ENCODE measurements at regions of chr3 and their contacts with region 1.

Region 1: GRCh38 chr3:184174646-184175492 is at the start of gene AP2M1:
- DNase-seq: peak; percentile 94 to 99 (median 97)
- ATAC-seq: peak; percentile 98
- H3K4me3 ChIP-seq: peak within 1 kb of the TSS; percentile 87
- H3K4me3 Mint-ChIP-seq: peak within 1 kb of the TSS; percentile 96
- H3K27ac ChIP-seq: peak within 1 kb of the TSS in 1 of 2 donors; percentile 79
- H3K27ac Mint-ChIP-seq: peak within 1 kb of the TSS; percentile 86
- H3K4me1 ChIP-seq: peaks cover 35% of the 10 kb centered on the region
- H3K4me1 Mint-ChIP-seq: peaks cover 42% of the 10 kb centered on the region
- H3K27me3 ChIP-seq: no peaks in the 10 kb centered on the region
- H3K27me3 Mint-ChIP-seq: no peaks in the 10 kb centered on the region
- CTCF ChIP-seq: no peak
- total RNA-seq, gene AP2M1: 123 to 136 TPM

Region 2: DNA sequence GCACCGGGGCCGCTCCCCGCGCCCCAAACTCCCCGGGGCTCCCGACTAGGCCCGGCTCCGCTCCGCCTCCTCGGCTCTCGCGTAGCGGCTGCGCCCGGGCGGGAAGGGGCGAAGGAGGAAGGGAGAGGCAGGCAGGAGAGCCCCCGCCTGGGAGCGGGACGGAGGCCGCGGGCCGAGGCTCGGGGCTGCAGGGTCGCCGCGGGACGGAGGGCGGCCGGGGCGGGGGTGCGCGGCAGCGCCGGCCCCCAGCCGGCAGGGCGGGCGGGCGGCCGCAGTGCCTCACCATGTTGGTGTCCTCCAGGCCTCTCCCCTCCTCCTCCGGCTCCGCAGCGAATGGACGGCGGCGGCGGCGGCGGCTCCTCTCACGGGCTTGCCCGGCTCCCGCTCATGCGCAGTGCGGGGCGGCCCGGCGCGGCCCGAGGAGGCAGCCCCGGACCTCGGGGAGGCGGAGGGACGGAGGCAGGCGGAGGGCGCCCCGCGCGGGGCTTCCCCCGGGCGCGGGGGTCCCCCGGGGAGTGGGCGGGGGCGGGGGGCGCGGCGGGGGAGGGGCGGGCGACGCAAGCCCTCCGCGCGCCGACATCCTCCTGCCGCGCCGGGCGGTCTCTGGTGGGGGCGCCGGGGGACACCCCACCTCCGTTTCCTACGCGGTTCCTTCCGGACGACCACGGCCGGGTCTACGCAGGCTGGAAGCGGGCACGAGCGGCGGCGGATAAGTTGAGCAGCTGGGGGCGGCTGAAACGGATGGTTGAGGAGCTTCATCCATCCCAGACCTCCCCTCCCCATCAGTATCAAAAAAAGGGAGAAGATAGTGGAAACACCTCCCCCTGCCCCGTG is 1194.4 kb before region 1 on chr3 and contains the start of gene DCUN1D1:
- CTCF ChIA-PET with region 1: no interaction called
- POLR2A ChIA-PET with region 1: no interaction called
- intact Hi-C with region 1: loop called in 1 of 2 experiments (anchors 10 kb)
- DNase-seq: peak; percentile 78 to 94 (median 86)
- ATAC-seq: peak; percentile 85
- H3K4me3 ChIP-seq: peak within 1 kb of the TSS; percentile 93
- H3K4me3 Mint-ChIP-seq: peak within 1 kb of the TSS; percentile 97
- H3K27ac ChIP-seq: peak within 1 kb of the TSS in 1 of 2 donors; percentile 39
- H3K27ac Mint-ChIP-seq: peak within 1 kb of the TSS; percentile 82
- H3K4me1 ChIP-seq: peaks cover 31% of the 10 kb centered on the region
- H3K4me1 Mint-ChIP-seq: peaks cover 44% of the 10 kb centered on the region
- H3K27me3 ChIP-seq: no peaks in the 10 kb centered on the region
- H3K27me3 Mint-ChIP-seq: no peaks in the 10 kb centered on the region
- CTCF ChIP-seq: no peak
- total RNA-seq, gene DCUN1D1: 35.4 to 38.9 TPM

Region 3: DNA sequence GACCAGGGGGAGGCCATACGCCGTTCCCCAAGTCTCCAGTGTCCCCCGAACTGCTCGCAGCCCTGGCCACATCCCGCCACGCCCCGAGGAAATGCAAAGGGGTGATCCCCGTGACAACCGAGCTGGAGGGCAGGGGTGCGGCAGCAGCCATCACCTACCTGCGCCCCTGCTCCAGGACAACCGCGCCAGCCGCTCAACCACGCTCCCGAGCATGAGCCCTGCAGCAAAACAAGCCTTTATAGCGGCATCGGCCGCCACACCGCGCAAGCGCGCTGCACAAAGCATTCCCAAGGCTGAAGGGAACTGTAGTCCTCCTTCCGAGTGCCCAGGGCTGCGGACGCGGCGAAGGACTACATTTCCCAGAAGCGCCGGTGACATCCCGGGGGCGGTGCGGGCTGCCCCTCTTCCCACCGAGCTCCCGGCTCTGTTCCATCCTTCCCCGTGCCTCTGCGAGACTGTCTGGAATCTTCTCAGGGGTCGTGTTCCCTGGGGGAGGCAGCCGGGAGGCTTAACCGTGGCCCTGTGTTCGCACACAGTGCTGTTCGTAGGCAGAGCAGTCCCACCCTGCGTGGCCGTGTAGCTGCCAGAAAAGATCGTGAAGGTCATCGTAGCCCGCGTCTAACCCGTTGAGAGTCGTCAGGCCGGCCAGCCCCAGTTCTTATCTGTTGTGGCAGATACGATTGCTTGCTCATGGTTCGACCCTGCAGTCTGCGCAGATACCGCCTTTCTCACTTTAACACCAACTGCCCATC is 157.0 kb before region 1 on chr3 and contains the start of gene ABCC5:
- CTCF ChIA-PET with region 1: no interaction called
- POLR2A ChIA-PET with region 1: interaction called, 3 read pairs
- intact Hi-C with region 1: loop called in 1 of 2 experiments (anchors 1 kb)
- DNase-seq: peak; percentile 65 to 92 (median 78)
- ATAC-seq: peak; percentile 94
- H3K4me3 ChIP-seq: peak within 1 kb of the TSS; percentile 96
- H3K4me3 Mint-ChIP-seq: peak within 1 kb of the TSS; percentile 100
- H3K27ac ChIP-seq: peak within 1 kb of the TSS; percentile 23 to 43
- H3K27ac Mint-ChIP-seq: peak within 1 kb of the TSS; percentile 66
- H3K4me1 ChIP-seq: peaks cover 16% of the 10 kb centered on the region
- H3K4me1 Mint-ChIP-seq: peaks cover 26% of the 10 kb centered on the region
- H3K27me3 ChIP-seq: peaks cover 0 to 3% of the 10 kb centered on the region in 2 experiments
- H3K27me3 Mint-ChIP-seq: peaks cover 5% of the 10 kb centered on the region
- CTCF ChIP-seq: peak; percentile 89
- total RNA-seq, gene ABCC5: 10.8 to 11.4 TPM

Region 4: DNA sequence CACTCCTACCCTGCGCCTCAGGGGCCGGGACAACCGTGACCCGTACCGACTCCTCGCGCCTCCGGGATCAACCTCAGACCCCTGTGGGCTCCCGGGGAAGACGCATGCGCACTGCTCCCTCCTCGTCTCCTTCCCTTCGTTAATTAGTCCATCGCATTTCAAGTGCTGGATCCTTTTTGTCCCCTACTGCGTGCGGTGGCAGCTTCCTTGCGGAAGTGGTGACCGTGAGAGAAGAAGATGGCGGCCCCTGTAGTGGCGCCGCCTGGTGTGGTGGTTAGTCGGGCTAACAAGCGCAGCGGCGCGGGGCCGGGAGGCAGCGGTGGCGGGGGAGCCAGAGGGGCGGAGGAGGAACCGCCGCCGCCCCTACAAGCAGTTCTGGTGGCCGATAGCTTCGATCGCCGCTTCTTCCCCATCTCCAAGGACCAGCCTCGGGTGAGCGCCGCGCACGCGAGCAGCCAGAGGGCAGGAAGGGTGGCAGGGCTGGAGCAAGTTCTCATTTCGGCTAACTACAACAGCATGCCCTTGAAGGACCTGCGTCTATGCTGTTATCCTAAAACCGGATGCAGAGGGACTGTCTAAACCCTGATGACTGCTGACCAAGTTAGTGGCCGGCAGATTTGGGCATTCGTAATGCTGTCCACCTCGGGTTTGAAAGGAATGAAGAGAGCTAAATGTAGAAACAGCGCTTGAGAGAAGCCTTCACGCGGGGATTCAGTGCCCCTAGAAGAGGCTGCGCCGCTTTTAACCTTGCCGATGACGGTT is 39.5 kb before region 1 on chr3 and contains the start of gene EIF2B5:
- CTCF ChIA-PET with region 1: interaction called, 3 read pairs
- POLR2A ChIA-PET with region 1: interaction called, 9 read pairs
- intact Hi-C with region 1: loop called in 1 of 2 experiments (anchors 2 kb)
- DNase-seq: peak; percentile 72 to 95 (median 82)
- ATAC-seq: peak; percentile 88
- H3K4me3 ChIP-seq: peak within 1 kb of the TSS; percentile 99
- H3K4me3 Mint-ChIP-seq: peak within 1 kb of the TSS; percentile 99
- H3K27ac ChIP-seq: peak within 1 kb of the TSS; percentile 71 to 76
- H3K27ac Mint-ChIP-seq: peak within 1 kb of the TSS; percentile 97
- H3K4me1 ChIP-seq: peaks cover 29% of the 10 kb centered on the region
- H3K4me1 Mint-ChIP-seq: peaks cover 50% of the 10 kb centered on the region
- H3K27me3 ChIP-seq: no peaks in the 10 kb centered on the region
- H3K27me3 Mint-ChIP-seq: no peaks in the 10 kb centered on the region
- CTCF ChIP-seq: peak; percentile 31
- total RNA-seq, gene EIF2B5: 53.6 TPM

Region 5: DNA sequence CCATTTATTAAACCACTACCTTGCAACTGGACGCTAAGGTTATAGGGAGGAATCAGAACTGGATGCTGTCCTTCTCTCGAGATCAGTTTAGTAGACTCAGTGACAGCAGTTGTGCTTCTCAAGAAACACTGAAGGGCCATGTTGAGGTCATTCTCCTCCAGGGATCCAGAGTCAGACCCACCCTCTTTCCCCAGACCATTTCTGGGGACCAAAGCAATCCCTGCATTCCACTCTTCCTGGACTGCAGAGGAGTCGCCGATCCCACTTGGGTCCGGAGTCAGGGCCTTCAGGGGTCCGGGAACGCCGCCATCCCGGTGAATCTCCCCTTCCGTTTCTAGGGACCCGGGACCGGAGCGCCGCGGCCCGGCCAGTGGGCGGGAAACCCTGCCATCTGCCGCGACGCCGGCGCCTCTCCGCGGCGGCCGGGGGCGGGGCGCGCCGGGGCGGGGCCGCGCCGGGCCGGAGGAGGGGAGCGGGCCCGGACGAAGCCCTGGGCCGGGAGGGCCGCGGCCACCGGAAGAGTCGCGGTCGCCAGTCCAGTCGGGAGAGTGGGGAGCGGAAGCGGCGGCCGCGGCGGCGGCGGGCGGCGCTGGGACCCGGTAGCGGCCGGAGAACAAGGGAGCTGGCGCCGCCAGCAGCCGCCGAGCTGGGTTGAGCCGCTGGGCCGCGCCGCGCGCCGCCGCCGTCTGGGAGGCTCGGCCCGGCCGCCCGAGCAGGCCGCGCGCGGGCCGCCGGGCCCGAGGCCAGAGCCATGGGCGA is 19.8 kb before region 1 on chr3 and contains the start of gene DVL3:
- CTCF ChIA-PET with region 1: no interaction called
- POLR2A ChIA-PET with region 1: interaction called, 6 read pairs
- intact Hi-C with region 1: loop called in 1 of 2 experiments (anchors 2 kb)
- DNase-seq: peak in 11 of 14 experiments; percentile 7 to 73 (median 44)
- ATAC-seq: peak; percentile 64
- H3K4me3 ChIP-seq: peak within 1 kb of the TSS; percentile 90
- H3K4me3 Mint-ChIP-seq: peak within 1 kb of the TSS; percentile 95
- H3K27ac ChIP-seq: peak within 1 kb of the TSS in 1 of 2 donors; percentile 30
- H3K27ac Mint-ChIP-seq: peak within 1 kb of the TSS; percentile 81
- H3K4me1 ChIP-seq: peaks cover 32% of the 10 kb centered on the region
- H3K4me1 Mint-ChIP-seq: peaks cover 45% of the 10 kb centered on the region
- H3K27me3 ChIP-seq: no peaks in the 10 kb centered on the region
- H3K27me3 Mint-ChIP-seq: no peaks in the 10 kb centered on the region
- CTCF ChIP-seq: no peak
- total RNA-seq, gene DVL3: 30.0 to 31.7 TPM